MCF 10A (cell line): ENCODE measurements at regions of chr1 and their contacts with region 1.

Region 1: GRCh38 chr1:154183045-154183915 is 8.6 kb downstream of the TPM3 start:
- DNase-seq: peak; percentile 99
- H3K4me3 Mint-ChIP-seq: peak overlapping the region; percentile 92
- H3K27ac Mint-ChIP-seq: peak overlapping the region; percentile 96
- H3K4me1 Mint-ChIP-seq: peaks cover 27% of the 10 kb centered on the region
- H3K27me3 Mint-ChIP-seq: no peaks in the 10 kb centered on the region
- CTCF ChIP-seq: no peak

Region 2: DNA sequence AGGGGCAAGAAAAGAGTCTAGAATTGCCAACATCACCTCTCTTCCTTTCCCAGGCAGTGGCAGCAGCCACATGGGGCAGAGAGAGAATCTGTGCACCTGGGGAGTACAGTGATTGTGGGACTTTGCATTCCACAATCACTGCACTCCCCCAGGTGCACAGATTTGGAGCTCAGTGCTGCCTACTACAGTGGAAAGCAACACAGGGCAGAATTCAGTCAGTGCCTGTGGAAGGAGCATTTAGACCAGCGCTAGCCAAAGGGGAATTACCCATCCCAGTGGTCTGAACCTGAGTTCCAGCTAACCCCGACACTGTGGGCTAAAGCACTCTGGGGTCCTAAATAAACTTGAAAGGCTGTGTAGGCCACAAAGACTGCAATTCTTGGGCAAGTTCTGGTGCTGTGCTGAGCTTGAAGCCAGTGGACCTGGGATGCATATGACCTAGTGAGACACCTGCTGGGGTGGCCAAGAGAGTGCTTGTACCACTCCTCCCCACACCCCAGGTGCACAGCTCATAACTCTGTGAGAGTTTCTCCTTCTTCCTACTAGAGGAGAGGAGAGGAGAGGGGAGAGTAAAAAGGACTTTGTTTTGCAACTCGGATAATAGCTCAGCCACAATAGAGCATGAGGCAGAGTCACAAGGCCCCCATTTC is 78.7 kb before region 1 on chr1:
- CTCF ChIA-PET with region 1: no interaction called
- POLR2A ChIA-PET with region 1: no interaction called
- intact Hi-C with region 1: no loop called
- DNase-seq: peak; percentile 11
- H3K4me3 Mint-ChIP-seq: no peak overlapping the region
- H3K27ac Mint-ChIP-seq: no peak overlapping the region
- H3K4me1 Mint-ChIP-seq: no peaks in the 10 kb centered on the region
- H3K27me3 Mint-ChIP-seq: no peaks in the 10 kb centered on the region
- CTCF ChIP-seq: peak; percentile 4

Region 3: GRCh38 chr1:154193821-154194220 is 10.5 kb after region 1 on chr1:
- CTCF ChIA-PET with region 1: interaction called, 8 read pairs
- POLR2A ChIA-PET with region 1: interaction called, 58 read pairs
- intact Hi-C with region 1: no loop called
- DNase-seq: peak; percentile 87
- H3K4me3 Mint-ChIP-seq: no peak overlapping the region
- H3K27ac Mint-ChIP-seq: peak overlapping the region; percentile 81
- H3K4me1 Mint-ChIP-seq: peaks cover 19% of the 10 kb centered on the region
- H3K27me3 Mint-ChIP-seq: peaks cover 23% of the 10 kb centered on the region
- CTCF ChIP-seq: no peak

Region 4: DNA sequence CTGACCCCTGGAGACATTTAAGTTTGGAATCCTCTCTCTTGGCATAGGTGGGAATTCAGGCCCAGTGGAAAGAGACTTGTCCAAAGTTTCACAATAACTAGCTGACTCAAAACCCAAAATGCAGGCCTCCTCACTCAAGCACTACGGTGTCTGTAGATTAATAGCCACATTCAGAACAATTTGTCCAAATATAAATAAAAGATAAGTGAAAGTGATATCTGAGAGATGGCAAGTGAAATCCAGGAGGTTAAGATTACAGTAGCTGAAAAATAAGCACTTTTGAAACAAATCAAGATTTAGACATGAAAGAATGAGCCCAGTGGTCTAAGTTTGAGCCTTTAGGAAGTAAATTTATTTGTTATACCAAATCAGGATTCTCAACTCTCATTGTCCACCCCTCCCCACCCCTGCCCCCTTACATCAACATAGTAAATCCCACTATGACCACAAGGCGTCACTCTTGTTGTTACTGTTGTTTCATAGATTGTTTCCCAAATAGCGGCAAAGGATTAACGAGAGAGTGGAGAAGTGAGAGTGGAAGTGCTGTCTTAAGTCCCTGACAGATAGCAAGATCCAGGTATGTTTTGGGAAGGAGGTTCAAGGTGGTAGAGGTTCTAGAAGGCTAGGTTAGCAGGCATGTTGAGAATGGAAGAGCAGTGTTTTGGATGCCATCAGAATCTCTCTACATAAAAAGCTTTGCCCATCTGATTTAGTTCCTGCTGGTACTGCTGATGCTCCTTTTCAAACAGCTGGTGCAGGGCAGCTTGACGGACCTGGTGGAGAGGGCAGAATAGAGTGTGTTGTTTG is 15.7 kb after region 1 on chr1:
- CTCF ChIA-PET with region 1: interaction called, 8 read pairs
- POLR2A ChIA-PET with region 1: interaction called, 58 read pairs
- intact Hi-C with region 1: no loop called
- DNase-seq: peak; percentile 80
- H3K4me3 Mint-ChIP-seq: no peak overlapping the region
- H3K27ac Mint-ChIP-seq: no peak overlapping the region
- H3K4me1 Mint-ChIP-seq: peaks cover 12% of the 10 kb centered on the region
- H3K27me3 Mint-ChIP-seq: no peaks in the 10 kb centered on the region
- CTCF ChIP-seq: peak; percentile 45

Region 5: GRCh38 chr1:154546264-154547063 is 363.2 kb after region 1 on chr1:
- CTCF ChIA-PET with region 1: no interaction called
- POLR2A ChIA-PET with region 1: no interaction called
- intact Hi-C with region 1: loop called (anchors 10 kb)
- DNase-seq: peak; percentile 83
- H3K4me3 Mint-ChIP-seq: no peak overlapping the region
- H3K27ac Mint-ChIP-seq: no peak overlapping the region
- H3K4me1 Mint-ChIP-seq: peaks cover 10% of the 10 kb centered on the region
- H3K27me3 Mint-ChIP-seq: peaks cover 30% of the 10 kb centered on the region
- CTCF ChIP-seq: peak; percentile 87